HAP-1 (cell line): ENCODE measurements at regions of chr9 and their contacts with region 1.

Region 1: DNA sequence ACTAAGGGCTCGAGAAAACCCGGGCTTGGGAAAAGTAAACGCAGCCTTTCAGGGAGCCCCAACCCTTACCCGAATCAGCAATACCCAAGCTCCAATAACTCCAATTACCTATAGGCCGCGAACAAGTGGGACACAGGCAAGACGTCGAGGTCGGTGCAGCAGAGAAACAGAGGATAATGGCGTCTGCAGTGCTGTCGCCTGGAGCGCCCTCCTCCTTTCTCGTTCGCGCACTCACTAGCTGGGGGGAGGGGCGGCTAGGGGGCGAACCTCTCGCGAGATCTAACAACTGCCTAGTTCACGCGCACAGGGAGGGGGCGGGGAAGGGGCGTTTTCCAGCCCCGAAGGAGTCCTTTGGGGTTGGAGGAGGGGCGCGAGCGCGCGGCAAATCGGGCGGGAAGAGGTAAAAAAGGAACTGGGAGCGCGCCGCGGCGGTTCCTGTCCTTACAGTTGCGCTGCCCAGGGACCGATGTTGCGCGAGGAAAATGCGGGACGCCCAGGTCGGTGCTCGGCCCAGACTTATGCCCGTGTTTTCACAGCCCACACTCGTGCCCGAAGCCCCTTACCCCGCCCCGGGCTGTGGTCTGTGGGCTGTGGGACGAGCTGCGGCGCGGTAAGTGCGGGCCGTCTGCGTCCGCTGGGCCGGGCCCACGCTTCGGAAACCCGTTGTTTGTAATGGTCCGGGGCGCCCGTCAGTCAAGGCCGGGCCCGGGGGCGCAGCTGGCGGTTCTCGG is at the start of gene RMI1:
- DNase-seq: peak; percentile 94 to 100
- H3K4me3 ChIP-seq: peak within 1 kb of the TSS; percentile 98
- H3K4me1 ChIP-seq: peaks cover 28% of the 10 kb centered on the region
- H3K27me3 ChIP-seq: no peaks in the 10 kb centered on the region

Region 2: GRCh38 chr9:84170521-84171141 is 190.1 kb after region 1 on chr9:
- in situ Hi-C with region 1: loop called (anchors 10 kb)
- DNase-seq: no peak
- H3K4me3 ChIP-seq: no peak overlapping the region
- H3K4me1 ChIP-seq: no peaks in the 10 kb centered on the region
- H3K27me3 ChIP-seq: no peaks in the 10 kb centered on the region

Region 3: GRCh38 chr9:84397151-84397728 is 416.7 kb after region 1 on chr9:
- in situ Hi-C with region 1: no loop called
- DNase-seq: peak; percentile 63 to 78
- H3K4me3 ChIP-seq: no peak overlapping the region
- H3K4me1 ChIP-seq: no peaks in the 10 kb centered on the region
- H3K27me3 ChIP-seq: peaks cover 9% of the 10 kb centered on the region